Heart right ventricle (tissue), 16 donors: ENCODE measurements at regions of chr3 and their contacts with region 1.

Region 1: DNA sequence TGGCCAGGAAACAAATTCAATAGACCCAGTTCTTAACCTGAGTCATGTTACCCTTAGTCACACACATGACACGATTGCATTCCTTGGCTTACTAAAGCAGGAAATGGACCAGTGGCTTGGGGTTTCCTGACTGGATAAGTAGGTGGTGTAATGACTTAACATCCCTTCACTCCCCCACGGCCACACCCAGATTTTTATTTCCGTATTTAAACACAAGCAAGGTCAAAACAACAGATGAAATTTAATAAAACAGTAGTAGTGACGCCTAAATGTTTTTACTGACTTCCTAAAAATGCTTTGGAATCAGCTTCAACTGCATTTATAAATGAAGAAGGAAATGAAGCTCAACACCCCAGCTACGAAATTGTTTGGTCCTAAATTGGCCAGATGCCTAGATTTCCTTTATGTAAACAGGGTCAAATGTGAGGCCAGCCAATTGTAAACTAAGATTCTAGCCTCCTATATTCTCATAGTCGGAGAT is 324.3 kb downstream of the CHST2 start:
- DNase-seq: peak in 1 of 2 donors; percentile 85
- ATAC-seq: peak; percentile 82 to 98 (median 96)
- H3K4me3 ChIP-seq: no peak overlapping the region
- H3K27ac ChIP-seq: peak overlapping the region in 9 of 10 donors; percentile 50 to 80 (median 74)
- H3K4me1 ChIP-seq: peaks cover 6 to 27% (median 16%) of the 10 kb centered on the region in 9 donors
- H3K27me3 ChIP-seq: no peaks in the 10 kb centered on the region
- CTCF ChIP-seq: no peak

Region 2: GRCh38 chr3:143135150-143135549 is 308.7 kb before region 1 on chr3:
- intact Hi-C with region 1: loop called in 1 of 10 experiments (anchors 10 kb)
- DNase-seq: no peak
- ATAC-seq: peak in 5 of 8 donors; percentile 25 to 57 (median 39)
- H3K4me3 ChIP-seq: no peak overlapping the region
- H3K27ac ChIP-seq: peak overlapping the region in 1 of 10 donors; percentile 18
- H3K4me1 ChIP-seq: peaks cover 0 to 31% (median 9%) of the 10 kb centered on the region in 9 donors
- H3K27me3 ChIP-seq: peaks cover 0 to 14% (median 0%) of the 10 kb centered on the region in 7 donors
- CTCF ChIP-seq: peak in 1 of 9 donors; percentile 24

Region 3: DNA sequence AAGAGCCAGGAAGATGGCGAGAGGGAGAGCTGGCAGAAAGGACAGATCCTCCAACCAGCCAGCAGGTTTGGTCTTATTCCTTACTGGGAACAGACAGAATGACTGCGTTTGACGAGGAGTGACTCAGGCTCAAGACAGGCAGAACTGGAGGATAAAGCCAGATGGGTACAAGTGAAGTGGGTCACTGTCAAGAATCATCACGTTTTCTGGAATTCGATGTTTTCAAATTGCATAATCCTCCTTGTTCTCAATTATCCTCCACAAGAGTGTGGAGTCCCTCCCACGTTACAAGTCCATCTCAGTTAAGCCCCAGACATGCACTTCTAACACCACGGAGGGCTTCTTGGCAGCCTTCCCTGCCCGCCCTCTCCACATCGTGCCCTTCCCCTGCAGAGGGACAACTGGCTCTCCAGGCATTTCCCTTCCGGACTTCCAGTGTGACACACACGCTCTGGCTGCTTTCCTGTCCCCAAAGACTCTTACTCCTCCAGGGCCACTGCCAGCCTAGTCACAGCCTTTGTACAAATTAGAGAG is 141.2 kb before region 1 on chr3:
- intact Hi-C with region 1: loop called in 2 of 10 experiments (anchors 5 kb)
- DNase-seq: peak; percentile 70 to 74
- ATAC-seq: peak; percentile 81 to 93 (median 90)
- H3K4me3 ChIP-seq: no peak overlapping the region
- H3K27ac ChIP-seq: peak overlapping the region in 7 of 10 donors; percentile 14 to 52 (median 37)
- H3K4me1 ChIP-seq: peaks cover 0 to 49% (median 30%) of the 10 kb centered on the region in 9 donors
- H3K27me3 ChIP-seq: no peaks in the 10 kb centered on the region
- CTCF ChIP-seq: no peak